Sciatic nerve (tissue), 2 donors: ENCODE measurements at regions of chr10 and their contacts with region 1.

Region 1: DNA sequence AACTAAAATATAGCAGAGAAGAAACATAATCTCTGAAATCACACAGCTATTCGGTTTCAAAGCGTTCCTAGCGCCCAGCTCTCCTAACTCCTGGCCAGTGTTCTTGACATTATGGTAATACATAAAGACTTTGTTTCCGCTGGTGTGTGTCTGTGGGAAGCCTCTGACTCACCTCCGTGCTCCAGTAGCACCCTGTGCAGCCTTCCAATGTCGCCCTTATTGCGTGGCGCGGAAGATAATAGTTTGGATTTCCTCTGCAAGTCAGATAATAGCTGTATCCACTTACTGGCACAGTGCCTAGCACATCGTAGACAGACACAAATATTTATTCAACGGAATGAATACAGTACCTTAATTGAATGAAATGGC is 570 bp downstream of the BMS1 start:
- DNase-seq: no peak
- ATAC-seq: no peak

Region 2: GRCh38 chr10:42623929-42624328 is 159.2 kb before region 1 on chr10:
- intact Hi-C with region 1: no loop called
- DNase-seq: no peak
- ATAC-seq: no peak

Region 3: DNA sequence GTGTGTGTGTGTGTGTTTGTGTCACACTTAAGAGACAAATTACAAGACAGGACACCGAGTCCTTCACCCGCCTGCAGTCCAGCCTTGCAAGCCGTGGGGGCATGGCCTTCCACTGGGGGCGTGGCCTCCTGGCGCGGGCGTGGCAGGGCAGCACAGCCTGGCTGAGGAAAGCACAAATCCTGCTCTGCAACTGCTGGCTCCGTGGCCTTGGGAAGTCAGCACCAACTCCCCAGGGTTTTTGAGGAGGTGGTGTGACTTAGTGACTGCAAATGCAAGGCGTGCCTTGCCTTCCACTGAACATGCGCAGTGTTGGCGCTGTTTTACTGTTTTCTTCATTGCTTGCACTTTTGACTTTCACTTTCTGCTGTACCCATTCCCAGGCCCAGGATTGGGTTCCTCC is 13.5 kb before region 1 on chr10:
- intact Hi-C with region 1: loop called (anchors 2 kb)
- DNase-seq: no peak
- ATAC-seq: no peak